CD4-positive, alpha-beta T cell (primary cell): ENCODE measurements at regions of chr20 and their contacts with region 1.

Region 1: DNA sequence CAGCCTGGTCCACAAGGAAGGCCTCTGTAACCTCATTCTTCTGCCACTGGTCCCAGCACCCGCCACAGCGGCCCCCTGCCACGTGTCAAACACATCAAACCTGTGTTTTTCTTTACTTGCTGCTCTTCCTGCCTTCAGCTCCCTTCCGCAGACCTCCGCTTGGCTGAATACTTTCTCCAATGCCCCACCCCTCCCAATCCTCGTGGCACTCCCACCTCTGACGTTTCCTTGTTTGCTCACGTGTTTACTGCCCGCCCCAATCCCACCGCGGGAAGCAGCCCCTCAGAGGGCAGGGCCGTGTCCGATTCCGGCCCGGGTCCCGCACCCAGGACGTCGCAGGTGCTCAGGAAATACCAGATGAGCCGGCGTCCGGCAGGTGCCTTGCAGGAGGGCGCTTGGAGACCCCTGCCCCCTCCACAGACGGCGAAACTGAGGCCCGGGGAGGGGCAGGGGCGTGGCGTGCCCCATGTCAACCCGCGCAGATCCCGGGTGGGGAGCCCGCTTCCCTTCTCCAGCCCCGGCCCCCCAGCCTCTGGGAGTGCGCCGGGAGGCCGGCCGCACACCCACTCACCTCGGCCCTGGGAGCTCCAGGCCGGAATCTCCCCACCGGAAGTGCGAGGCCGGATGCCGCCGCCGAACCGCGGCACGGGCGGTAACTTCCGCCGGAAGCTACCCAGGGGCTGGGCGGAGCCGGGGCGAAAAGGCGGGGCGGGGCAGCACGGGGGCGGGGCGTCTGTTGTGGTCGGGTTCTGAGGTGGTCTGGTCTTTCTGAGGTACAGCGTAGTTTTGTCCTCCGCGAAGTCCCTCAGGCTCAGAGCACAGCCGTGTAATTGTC is 42.4 kb downstream of the ELMO2 start:
- DNase-seq: peak; percentile 78 to 94 (median 84)
- ATAC-seq: peak; percentile 73
- H3K4me3 ChIP-seq: peak overlapping the region; percentile 96
- H3K4me3 Mint-ChIP-seq: peak overlapping the region; percentile 90
- H3K27ac ChIP-seq: peak overlapping the region; percentile 100
- H3K27ac Mint-ChIP-seq: peak overlapping the region; percentile 84
- H3K4me1 ChIP-seq: peaks cover 81% of the 10 kb centered on the region
- H3K4me1 Mint-ChIP-seq: peaks cover 77% of the 10 kb centered on the region
- H3K27me3 ChIP-seq: no peaks in the 10 kb centered on the region
- H3K27me3 Mint-ChIP-seq: no peaks in the 10 kb centered on the region
- CTCF ChIP-seq: no peak

Region 2: DNA sequence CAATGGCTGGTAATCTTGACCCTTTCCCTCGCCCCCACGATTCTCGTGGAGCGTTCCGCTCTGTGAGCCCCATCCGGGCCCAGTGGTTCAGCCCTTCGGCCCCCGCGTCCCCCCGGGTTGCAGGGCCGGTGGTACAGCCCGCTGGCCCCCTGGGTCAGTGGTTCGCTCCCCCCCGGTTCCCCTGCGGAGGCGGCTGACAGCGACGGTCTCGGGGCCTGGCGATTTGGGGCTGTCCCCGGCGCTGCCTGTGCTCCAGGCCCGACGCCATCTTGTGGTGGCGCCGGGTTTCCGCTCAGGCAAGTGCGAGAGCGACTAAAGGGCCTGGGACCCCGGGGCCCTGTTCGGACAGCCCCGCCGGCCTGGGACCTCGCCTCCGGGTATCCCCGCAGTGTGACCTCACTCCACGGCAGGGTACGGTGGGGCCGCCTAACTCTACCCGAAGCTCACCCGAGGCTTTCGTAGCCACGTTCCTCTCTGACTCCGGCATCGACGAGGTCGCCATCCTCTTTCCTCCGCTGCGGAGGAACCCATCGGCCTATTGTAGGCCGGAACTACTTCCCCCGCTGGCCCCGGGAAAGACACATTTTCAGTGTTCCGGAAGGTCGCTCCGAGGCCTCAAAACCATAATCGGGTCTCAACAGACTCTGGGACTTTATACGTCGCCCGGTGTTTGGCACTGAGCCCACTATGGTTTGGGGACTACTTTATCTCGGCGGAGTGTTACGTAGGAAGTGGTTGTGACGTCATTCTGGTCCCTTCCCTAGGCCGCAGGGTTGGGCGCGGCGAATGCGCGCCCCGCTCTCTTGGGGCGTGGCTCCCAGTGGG is 392.1 kb before region 1 on chr20 and contains the start of gene ZNF335:
- CTCF ChIA-PET with region 1: no interaction called
- POLR2A ChIA-PET with region 1: interaction called, 14 read pairs
- intact Hi-C with region 1: loop called in 1 of 2 experiments (anchors 10 kb)
- DNase-seq: peak; percentile 86 to 97 (median 94)
- ATAC-seq: peak; percentile 80
- H3K4me3 ChIP-seq: peak within 1 kb of the TSS; percentile 96
- H3K4me3 Mint-ChIP-seq: peak within 1 kb of the TSS; percentile 94
- H3K27ac ChIP-seq: peak within 1 kb of the TSS; percentile 99 to 100
- H3K27ac Mint-ChIP-seq: peak within 1 kb of the TSS; percentile 100
- H3K4me1 ChIP-seq: peaks cover 36% of the 10 kb centered on the region
- H3K4me1 Mint-ChIP-seq: peaks cover 28% of the 10 kb centered on the region
- H3K27me3 ChIP-seq: no peaks in the 10 kb centered on the region
- H3K27me3 Mint-ChIP-seq: peaks cover 4% of the 10 kb centered on the region
- CTCF ChIP-seq: no peak
- total RNA-seq, gene ZNF335: 67.3 to 74.6 TPM

Region 3: DNA sequence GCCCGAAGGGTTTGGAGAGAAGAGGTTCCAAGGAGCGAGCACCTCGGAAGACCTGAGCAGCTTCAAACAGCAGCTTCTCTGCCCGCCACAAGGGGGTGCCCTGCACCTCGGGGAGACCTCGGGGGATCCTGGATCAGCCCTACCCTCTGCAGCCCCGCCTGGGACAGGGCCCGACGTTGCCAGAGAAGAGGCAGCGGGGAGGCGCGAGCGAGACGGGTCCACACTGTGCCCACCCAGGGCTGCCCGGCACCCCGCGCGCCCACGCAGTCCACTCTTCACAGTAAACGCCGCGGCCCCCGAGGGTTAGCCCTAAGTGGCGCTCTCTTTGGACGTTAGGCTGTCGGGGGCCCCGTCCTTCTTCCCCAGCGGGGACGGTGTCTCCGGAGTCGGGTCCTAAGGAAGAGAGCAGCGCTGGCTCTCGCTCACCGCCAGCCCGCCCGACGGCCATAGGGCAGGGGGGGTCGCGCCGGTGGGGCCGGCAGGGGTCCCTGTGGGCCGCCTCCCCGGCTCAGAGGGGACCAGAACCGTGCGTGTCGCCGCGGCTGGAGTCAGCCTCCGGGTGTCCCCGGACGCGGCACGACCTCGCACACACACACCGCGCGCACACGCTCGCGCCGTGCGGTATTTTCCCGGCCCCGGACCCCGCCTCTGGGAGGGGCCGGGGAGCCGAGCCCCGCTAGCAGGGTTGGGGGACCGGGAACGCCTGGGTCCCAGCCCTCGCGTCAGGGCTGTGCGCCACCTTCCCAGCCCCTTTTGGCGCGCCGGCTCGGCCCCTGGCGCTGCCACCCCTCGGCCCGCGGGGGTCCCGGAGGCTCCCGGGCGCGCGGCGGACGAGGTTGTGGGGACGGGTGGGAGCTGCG is 56.6 kb before region 1 on chr20:
- CTCF ChIA-PET with region 1: interaction called, 7 read pairs
- POLR2A ChIA-PET with region 1: no interaction called
- intact Hi-C with region 1: loop called in 1 of 2 experiments (anchors 5 kb)
- DNase-seq: peak; percentile 56 to 88 (median 68)
- ATAC-seq: peak; percentile 84
- H3K4me3 ChIP-seq: peak overlapping the region; percentile 37
- H3K4me3 Mint-ChIP-seq: peak overlapping the region; percentile 65
- H3K27ac ChIP-seq: no peak overlapping the region
- H3K27ac Mint-ChIP-seq: no peak overlapping the region
- H3K4me1 ChIP-seq: peaks cover 22% of the 10 kb centered on the region
- H3K4me1 Mint-ChIP-seq: peaks cover 31% of the 10 kb centered on the region
- H3K27me3 ChIP-seq: peaks cover 46 to 67% of the 10 kb centered on the region in 2 experiments
- H3K27me3 Mint-ChIP-seq: peaks cover 83% of the 10 kb centered on the region
- CTCF ChIP-seq: peak; percentile 77

Region 4: DNA sequence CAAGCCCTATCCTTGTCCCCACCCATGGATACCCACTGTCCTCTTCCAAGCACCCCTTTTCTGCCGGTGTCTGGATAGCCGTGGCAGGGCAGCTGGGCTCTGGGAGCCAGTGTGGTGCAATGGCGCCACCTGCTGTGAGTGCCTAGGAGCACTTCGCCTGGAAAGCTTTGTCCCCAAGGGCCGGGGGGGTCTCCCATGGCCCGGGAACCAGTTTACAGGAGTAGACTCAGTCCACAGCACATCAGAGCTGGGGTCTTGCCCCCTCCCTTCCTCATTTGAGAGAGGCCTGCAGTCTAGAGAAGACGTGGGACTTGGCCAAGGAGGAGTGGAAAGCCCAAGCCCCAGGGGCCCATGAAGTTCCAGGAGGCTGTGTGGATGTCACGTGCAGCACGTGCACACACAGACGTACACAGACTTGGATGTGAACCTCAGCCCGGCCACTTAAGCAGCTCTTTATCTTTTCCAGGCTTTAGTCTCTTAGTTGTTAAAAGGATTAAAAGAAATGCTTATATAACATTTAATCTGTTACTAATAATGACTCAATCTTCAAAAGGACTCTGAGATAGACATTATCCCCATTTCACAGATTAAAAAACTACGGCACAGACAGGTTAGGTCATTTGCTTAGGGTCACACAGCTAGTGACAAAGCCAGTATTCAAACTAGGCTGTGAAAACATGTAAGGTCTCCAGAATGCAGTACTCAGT is 14.8 kb before region 1 on chr20:
- CTCF ChIA-PET with region 1: interaction called, 7 read pairs
- POLR2A ChIA-PET with region 1: interaction called, 14 read pairs
- intact Hi-C with region 1: no loop called
- DNase-seq: peak; percentile 22 to 70 (median 39)
- ATAC-seq: peak; percentile 61
- H3K4me3 ChIP-seq: no peak overlapping the region
- H3K4me3 Mint-ChIP-seq: no peak overlapping the region
- H3K27ac ChIP-seq: no peak overlapping the region
- H3K27ac Mint-ChIP-seq: peak overlapping the region; percentile 42
- H3K4me1 ChIP-seq: peaks cover 10% of the 10 kb centered on the region
- H3K4me1 Mint-ChIP-seq: peaks cover 18% of the 10 kb centered on the region
- H3K27me3 ChIP-seq: no peaks in the 10 kb centered on the region
- H3K27me3 Mint-ChIP-seq: no peaks in the 10 kb centered on the region
- CTCF ChIP-seq: peak; percentile 61

Region 5: GRCh38 chr20:46399401-46399800 is 35.4 kb after region 1 on chr20:
- CTCF ChIA-PET with region 1: interaction called, 3 read pairs
- POLR2A ChIA-PET with region 1: interaction called, 3 read pairs
- intact Hi-C with region 1: loop called in 1 of 2 experiments (anchors 2 kb)
- DNase-seq: peak in 4 of 14 experiments; percentile 7 to 82 (median 26)
- ATAC-seq: peak; percentile 20
- H3K4me3 ChIP-seq: no peak overlapping the region
- H3K4me3 Mint-ChIP-seq: peak overlapping the region; percentile 69
- H3K27ac ChIP-seq: peak overlapping the region in 1 of 2 donors; percentile 50
- H3K27ac Mint-ChIP-seq: peak overlapping the region; percentile 92
- H3K4me1 ChIP-seq: peaks cover 70% of the 10 kb centered on the region
- H3K4me1 Mint-ChIP-seq: peaks cover 68% of the 10 kb centered on the region
- H3K27me3 ChIP-seq: no peaks in the 10 kb centered on the region
- H3K27me3 Mint-ChIP-seq: no peaks in the 10 kb centered on the region
- CTCF ChIP-seq: no peak

Region 6: GRCh38 chr20:46562373-46563169 is 198.6 kb after region 1 on chr20:
- CTCF ChIA-PET with region 1: no interaction called
- POLR2A ChIA-PET with region 1: no interaction called
- intact Hi-C with region 1: no loop called
- DNase-seq: peak; percentile 10 to 69 (median 36)
- ATAC-seq: peak; percentile 69
- H3K4me3 ChIP-seq: no peak overlapping the region
- H3K4me3 Mint-ChIP-seq: no peak overlapping the region
- H3K27ac ChIP-seq: no peak overlapping the region
- H3K27ac Mint-ChIP-seq: no peak overlapping the region
- H3K4me1 ChIP-seq: peaks cover 8% of the 10 kb centered on the region
- H3K4me1 Mint-ChIP-seq: no peaks in the 10 kb centered on the region
- H3K27me3 ChIP-seq: peaks cover 5 to 8% of the 10 kb centered on the region in 2 experiments
- H3K27me3 Mint-ChIP-seq: peaks cover 15% of the 10 kb centered on the region
- CTCF ChIP-seq: peak; percentile 84